Gastrocnemius medialis (tissue), 4 donors: ENCODE measurements at regions of chr11 and their contacts with region 1.

Region 1: DNA sequence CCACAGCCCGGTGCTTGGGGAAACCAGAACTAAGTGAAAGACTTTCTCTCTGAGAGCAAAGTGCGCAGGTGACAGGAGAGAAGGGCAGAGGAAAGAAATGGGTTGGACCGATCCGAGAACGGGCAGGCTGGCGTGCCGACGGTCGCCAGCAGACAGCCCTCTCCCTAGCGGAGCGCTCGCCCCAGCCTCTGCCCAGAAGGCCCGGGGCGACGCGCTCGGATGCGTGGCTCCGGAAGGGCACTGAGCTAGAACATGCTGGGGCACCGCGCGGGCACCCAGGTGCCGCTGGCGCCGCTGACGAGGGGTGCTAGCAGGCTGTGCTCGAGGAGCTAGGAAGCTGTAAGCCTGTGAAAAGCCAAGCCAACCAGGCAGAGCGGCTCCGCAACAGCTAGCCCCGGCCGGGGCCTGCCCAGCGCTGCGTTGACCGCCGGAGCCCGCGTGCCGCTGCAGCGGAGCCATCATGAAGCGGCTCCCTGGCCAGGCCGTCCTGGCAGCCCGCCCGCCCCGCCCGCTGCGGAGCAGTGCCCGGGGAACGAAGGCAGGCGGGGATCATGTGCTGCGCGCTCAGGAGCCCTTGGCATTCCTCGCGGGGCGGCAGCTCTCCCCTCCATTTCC is 22.1 kb upstream of the RRAS2 start:
- DNase-seq: peak; percentile 67 to 82
- ATAC-seq: peak; percentile 93
- H3K4me3 ChIP-seq: peak overlapping the region; percentile 61 to 66 (median 63)
- H3K27ac ChIP-seq: peak overlapping the region; percentile 82 to 86 (median 85)
- H3K4me1 ChIP-seq: peaks cover 0 to 5% of the 10 kb centered on the region in 2 donors
- H3K27me3 ChIP-seq: no peaks in the 10 kb centered on the region
- CTCF ChIP-seq: no peak
- POLR2A ChIP-seq: peak; percentile 23 to 30

Region 2: DNA sequence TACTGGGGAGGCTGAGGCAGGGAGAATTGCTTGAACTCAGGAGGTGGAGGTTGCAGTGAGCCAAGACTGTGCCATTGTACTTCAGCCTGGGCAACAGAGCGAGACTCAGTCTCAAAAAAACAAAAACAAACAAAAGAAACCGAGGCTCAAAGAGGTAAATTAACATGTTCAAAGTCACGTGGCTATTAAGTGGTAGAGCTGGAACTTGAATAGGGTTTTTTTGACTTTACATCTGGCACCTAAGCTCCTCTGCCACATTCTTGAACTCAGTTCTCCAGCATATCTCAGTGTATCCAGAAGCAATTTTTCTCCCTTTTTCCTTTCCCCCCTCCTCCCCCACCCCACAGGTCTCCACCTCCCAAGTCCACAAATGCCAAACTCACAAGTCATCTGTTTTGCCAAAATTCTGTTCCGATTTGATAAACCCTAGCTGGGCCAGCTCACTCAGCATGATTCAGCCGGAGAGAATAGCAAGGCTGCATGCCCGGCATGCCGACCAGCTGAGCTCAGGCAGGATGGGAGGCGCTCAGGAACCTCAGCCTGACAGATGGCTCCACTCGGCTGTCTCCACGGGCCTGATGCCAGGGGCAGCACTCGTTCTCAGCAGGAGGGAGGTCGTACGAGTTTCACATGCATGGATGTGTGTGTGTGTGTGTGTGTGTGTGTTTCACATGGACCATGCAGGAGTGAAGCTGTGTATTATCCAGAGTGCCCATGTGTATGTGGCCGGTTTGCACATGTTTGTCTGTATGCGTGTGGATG is 41.2 kb after region 1 on chr11:
- in situ Hi-C with region 1: no loop called
- intact Hi-C with region 1: loop called (anchors 1 kb)
- DNase-seq: peak; percentile 62 to 88
- ATAC-seq: peak; percentile 96
- H3K4me3 ChIP-seq: no peak overlapping the region
- H3K27ac ChIP-seq: peak overlapping the region in 3 of 4 donors; percentile 12 to 48 (median 36)
- H3K4me1 ChIP-seq: peaks cover 22 to 23% of the 10 kb centered on the region in 2 donors
- H3K27me3 ChIP-seq: no peaks in the 10 kb centered on the region
- CTCF ChIP-seq: no peak
- POLR2A ChIP-seq: no peak